Activated CD8-positive, alpha-beta T cell treated with anti-CD3 and anti-CD28 coated beads for 36 hours (primary cell): ENCODE measurements at regions of chr10 and their contacts with region 1.

Region 1: DNA sequence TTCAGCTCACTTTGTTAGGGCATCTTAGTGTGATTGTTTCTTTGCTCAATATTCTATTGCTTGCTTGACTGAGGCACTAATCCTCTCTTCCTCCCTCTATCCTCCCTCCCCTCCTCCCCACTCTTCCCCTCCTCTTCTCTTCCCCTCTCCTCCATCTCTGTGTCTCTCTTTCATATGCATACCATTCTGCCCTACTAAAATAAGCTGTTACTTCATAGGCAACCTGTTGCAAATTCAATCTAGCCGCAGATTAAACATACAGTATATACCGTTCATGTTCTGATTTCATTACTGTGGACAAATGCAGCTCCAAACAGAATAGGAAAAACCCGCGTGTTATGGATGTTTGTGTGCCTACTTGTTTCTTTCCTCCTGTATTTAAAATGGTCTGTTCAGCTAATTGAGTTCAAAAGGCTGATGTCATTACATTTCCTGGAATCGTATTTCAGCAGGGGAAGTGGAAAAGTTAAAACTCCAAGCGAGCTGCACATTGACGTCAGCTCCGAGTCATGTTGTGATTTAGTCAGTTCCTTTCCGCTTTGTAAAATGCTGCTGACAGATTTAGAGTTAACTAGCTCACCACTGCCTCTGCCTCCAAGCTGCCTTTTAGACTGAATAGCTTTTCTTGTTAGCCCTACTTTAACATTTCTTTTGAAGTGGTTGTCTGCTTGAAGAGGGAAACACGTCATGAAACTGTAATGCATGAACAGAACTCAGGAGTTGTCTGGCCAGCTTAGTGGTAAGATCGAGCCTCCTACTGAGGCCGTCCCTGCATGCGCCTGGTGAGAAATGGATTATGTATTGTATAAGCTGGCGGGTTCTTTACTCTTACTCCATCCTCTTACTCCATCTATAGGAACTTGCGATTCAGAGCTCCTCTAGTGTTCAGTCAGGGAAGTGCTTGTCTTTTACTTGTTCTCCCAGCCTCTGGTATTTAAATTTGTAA is 69.0 kb downstream of the CREM start:
- DNase-seq: peak; percentile 93
- ATAC-seq: peak; percentile 88
- H3K4me3 Mint-ChIP-seq: peak overlapping the region; percentile 90
- H3K27ac Mint-ChIP-seq: peak overlapping the region; percentile 100
- H3K4me1 Mint-ChIP-seq: peaks cover 42% of the 10 kb centered on the region
- H3K27me3 Mint-ChIP-seq: no peaks in the 10 kb centered on the region
- CTCF ChIP-seq: peak; percentile 94

Region 2: DNA sequence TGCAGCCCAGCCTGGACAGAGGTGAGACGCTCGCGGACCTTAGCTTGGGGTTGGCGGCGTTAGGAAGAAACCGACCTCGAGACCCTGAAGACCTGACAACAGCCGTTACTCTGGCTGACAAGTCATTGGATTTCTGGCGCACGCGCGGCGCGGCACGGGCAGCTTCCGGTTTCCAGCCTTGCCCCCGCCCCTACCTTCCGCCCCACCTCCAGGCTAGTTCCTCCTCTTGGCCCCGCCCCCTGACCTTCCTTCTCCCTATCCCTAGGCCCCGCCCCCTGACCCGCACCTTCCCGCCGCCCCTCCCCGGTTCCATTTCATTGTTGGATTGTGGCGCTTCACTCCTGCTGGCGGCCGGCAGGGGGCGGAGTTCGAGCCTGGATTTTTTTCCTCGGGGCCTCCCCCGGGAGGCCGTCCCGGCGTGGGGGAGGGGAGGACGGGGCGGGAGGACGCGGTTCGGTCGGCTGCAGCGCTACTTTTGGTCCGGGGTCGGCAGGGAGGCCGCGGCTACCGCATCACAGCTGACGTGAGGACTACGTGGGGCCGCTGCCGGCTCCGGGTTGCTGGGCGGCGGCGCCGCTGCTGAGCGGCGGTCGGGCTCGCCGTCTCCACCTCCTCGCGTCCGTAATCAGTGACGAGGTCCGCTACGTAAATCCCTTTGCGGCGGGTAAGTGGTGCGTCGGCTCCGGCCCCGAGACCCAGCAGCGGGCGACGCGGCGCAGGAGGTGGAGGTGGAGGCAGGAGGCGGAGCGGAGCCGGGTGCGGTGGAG is 68.9 kb before region 1 on chr10 and contains the start of gene CREM:
- CTCF ChIA-PET with region 1: interaction called, 148 read pairs
- POLR2A ChIA-PET with region 1: interaction called, 81 read pairs
- intact Hi-C with region 1: loop called (anchors 1 kb)
- DNase-seq: peak; percentile 100
- ATAC-seq: peak; percentile 91
- H3K4me3 Mint-ChIP-seq: peak within 1 kb of the TSS; percentile 97
- H3K27ac Mint-ChIP-seq: peak within 1 kb of the TSS; percentile 98
- H3K4me1 Mint-ChIP-seq: peaks cover 51% of the 10 kb centered on the region
- H3K27me3 Mint-ChIP-seq: no peaks in the 10 kb centered on the region
- CTCF ChIP-seq: peak; percentile 69
- total RNA-seq, gene CREM: 121 to 131 TPM

Region 3: DNA sequence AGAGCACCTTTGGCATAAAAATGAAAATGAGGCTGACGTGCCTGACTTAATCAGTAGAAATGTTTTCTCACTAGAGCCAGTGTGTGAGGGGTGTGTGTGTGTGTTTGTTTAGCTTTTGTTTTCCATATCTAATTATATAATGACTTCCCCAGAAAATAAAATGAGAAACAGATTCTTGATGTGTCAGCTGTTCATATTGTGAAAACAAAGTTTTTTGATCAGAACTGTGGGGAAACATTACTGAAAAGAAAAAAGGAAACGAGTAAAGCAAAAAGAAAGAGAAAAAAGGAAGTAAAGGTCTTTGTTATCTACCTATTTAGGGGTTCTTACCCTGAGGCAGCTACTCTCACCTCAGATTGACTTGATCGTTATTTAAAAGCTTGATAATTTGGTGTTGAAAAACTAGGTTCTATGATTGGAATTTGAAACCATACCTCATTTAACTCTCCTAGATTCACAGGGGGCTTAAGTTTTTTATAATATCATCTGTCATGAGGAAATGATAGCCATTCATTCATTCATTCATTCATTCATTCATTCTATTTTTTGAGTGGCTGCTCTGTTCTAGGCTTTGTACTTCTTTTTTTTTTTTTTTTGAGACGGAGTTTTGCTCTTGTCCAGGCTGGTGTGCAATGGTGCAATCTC is 11.0 kb before region 1 on chr10:
- CTCF ChIA-PET with region 1: interaction called, 12 read pairs
- POLR2A ChIA-PET with region 1: interaction called, 5 read pairs
- intact Hi-C with region 1: no loop called
- DNase-seq: no peak
- ATAC-seq: no peak
- H3K4me3 Mint-ChIP-seq: no peak overlapping the region
- H3K27ac Mint-ChIP-seq: no peak overlapping the region
- H3K4me1 Mint-ChIP-seq: peaks cover 3% of the 10 kb centered on the region
- H3K27me3 Mint-ChIP-seq: no peaks in the 10 kb centered on the region
- CTCF ChIP-seq: no peak

Region 4: DNA sequence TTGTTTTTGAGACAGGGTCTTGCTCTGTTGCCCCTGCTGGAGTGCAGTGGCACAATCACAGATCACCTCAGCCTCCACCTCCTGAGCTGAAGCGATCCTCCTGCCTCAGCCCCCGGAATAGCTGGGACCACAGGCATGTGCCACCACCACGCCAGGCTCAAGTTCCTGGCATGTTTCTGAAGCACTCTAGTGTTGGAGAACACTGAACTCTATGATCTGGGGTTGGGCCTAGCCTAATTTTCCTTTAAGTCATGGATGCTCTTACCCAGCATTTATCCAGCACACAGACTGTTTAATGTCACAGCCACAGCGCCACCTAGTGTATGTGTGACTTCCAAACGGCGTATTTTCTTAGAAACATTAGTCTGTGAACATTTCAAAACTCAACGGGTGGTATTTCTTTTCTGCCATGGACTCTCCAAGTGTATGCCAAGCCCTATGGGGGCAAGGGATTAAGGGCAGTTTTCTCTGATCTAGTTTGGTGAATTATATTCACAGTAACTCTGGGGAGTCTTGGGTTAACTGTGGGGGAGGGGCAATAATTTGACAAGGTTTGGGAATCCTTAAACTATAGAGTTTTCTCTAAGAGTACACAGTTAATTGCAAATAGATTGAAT is 22.8 kb after region 1 on chr10:
- CTCF ChIA-PET with region 1: interaction called, 42 read pairs
- POLR2A ChIA-PET with region 1: interaction called, 11 read pairs
- intact Hi-C with region 1: no loop called
- DNase-seq: peak; percentile 96
- ATAC-seq: peak; percentile 78
- H3K4me3 Mint-ChIP-seq: peak overlapping the region; percentile 37
- H3K27ac Mint-ChIP-seq: peak overlapping the region; percentile 91
- H3K4me1 Mint-ChIP-seq: peaks cover 43% of the 10 kb centered on the region
- H3K27me3 Mint-ChIP-seq: peaks cover 4% of the 10 kb centered on the region
- CTCF ChIP-seq: peak; percentile 88